Left ventricle myocardium superior (tissue), 1 donor: ENCODE measurements at regions of chr4 and their contacts with region 1.

Region 1: DNA sequence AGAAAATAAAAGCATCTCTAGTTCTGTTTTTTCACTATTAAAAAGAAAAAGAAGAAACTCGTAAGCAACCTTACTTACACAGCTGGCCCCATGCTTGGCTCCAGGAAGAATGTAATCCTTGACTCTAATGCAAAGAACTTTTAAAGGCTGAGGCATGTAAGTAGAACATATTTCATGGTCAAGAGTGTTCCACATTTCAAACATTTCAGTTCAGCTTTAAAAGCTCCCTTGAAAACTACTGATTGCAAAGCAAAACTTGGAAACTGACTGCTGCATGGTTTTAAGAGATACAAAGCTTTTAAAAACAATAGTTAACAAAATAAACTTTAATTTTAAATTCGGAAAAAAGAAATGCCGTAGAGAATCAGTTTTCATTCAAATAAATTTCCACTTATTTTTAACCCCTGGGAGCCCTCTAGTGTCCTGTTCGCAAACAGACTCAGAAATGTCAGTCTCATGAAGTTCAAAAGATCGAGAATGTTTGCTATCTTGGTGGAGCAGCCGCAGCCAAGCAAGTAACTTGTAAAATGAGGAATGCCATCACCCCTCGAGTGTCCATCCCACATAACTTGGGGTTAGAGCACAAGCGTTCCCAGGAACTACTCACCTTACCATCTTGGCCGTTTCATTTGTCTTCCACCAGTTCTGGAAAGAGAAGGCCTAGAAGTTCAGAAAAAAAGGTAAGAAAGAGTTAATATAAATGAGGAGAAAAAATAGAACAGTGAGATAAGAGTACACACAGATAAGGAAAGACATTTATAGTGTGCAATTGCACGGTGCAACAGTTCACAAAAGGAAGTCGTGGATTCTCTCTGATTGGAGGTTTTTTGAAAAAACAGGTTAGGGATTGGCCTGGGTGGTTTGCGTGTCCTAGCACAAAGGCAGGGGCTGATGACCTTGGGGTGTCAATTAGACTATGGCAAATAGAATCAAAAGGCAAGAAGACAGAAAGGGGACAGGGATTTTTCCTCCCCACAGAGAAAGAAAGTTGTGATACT is at the start of gene GASK1B:
- DNase-seq: no peak
- ATAC-seq: peak; percentile 67
- total RNA-seq, gene GASK1B: 63.4 TPM

Region 2: GRCh38 chr4:157992038-157992705 is 180.4 kb before region 1 on chr4:
- intact Hi-C with region 1: loop called (anchors 2 kb)
- DNase-seq: no peak
- ATAC-seq: peak; percentile 92

Region 3: GRCh38 chr4:158006990-158007389 is 165.6 kb before region 1 on chr4:
- intact Hi-C with region 1: loop called (anchors 5 kb)
- DNase-seq: no peak
- ATAC-seq: peak; percentile 82